Mammary epithelial cell (primary cell): ENCODE measurements at regions of chrX and their contacts with region 1.

Region 1: GRCh38 chrX:1657367-1658070 is 42.7 kb downstream of the ASMT start:
- DNase-seq: peak; percentile 82
- H3K4me3 ChIP-seq: peak overlapping the region; percentile 43 to 64 (median 59)
- H3K27ac ChIP-seq: peak overlapping the region; percentile 65
- H3K4me1 ChIP-seq: peaks cover 9% of the 10 kb centered on the region
- H3K27me3 ChIP-seq: no peaks in the 10 kb centered on the region
- CTCF ChIP-seq: peak in 1 of 2 donors; percentile 28

Region 2: DNA sequence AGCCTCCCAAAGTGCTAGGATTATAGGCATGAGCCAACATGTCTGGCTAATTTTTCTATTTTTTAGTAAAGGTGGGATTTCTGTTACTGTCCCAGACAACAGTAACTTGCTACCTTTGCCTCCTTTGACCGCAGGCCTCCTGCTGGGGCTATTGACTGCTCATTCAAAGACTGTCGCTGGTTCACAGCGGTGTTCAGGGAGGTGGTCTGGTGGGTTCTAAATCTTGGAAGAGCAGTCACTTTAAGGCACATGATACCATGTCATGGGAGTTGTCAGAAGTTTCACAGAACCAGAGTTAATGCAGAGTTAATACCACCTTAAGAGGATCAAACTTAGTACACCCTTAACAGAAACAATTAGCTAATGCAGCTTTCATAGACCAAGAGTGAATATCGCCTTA is 38.8 kb before region 1 on chrX:
- CTCF ChIA-PET with region 1: no interaction called
- dilution Hi-C with region 1: no loop called
- in situ Hi-C with region 1: no loop called
- intact Hi-C with region 1: no loop called
- DNase-seq: no peak
- H3K4me3 ChIP-seq: no peak overlapping the region
- H3K27ac ChIP-seq: no peak overlapping the region
- H3K4me1 ChIP-seq: no peaks in the 10 kb centered on the region
- H3K27me3 ChIP-seq: no peaks in the 10 kb centered on the region
- CTCF ChIP-seq: no peak

Region 3: DNA sequence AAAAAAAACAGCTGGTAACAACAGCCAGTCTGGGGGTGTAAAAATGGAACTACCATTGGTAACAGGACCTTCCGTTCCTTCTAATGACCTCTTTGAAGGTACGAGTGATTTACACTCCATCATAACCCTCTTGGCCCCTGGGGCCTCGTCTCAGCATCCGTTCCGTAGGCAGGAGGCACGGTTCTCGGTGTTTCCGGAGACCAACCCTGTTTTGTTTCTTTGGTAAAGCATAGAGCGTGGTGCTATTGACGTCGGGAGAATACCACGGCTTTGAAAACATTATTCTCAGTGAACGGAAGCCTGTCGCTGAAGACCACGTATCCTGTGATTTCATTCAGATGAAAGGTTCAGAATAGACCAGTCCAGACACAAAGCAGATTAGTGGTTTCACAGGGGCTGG is 156.3 kb after region 1 on chrX:
- CTCF ChIA-PET with region 1: no interaction called
- dilution Hi-C with region 1: no loop called
- in situ Hi-C with region 1: no loop called
- intact Hi-C with region 1: no loop called
- DNase-seq: no peak
- H3K4me3 ChIP-seq: no peak overlapping the region
- H3K27ac ChIP-seq: no peak overlapping the region
- H3K4me1 ChIP-seq: no peaks in the 10 kb centered on the region
- H3K27me3 ChIP-seq: no peaks in the 10 kb centered on the region
- CTCF ChIP-seq: no peak

Region 4: GRCh38 chrX:2595258-2595657 is 937.7 kb after region 1 on chrX:
- CTCF ChIA-PET with region 1: no interaction called
- dilution Hi-C with region 1: no loop called
- in situ Hi-C with region 1: loop called in 1 of 2 experiments (anchors 10 kb)
- intact Hi-C with region 1: loop called (anchors 1 kb)
- DNase-seq: peak; percentile 78
- H3K4me3 ChIP-seq: no peak overlapping the region
- H3K27ac ChIP-seq: no peak overlapping the region
- H3K4me1 ChIP-seq: no peaks in the 10 kb centered on the region
- H3K27me3 ChIP-seq: no peaks in the 10 kb centered on the region
- CTCF ChIP-seq: no peak

Region 5: GRCh38 chrX:2627272-2627867 is 969.9 kb after region 1 on chrX:
- CTCF ChIA-PET with region 1: no interaction called
- dilution Hi-C with region 1: no loop called
- in situ Hi-C with region 1: loop called in 1 of 2 experiments (anchors 10 kb)
- intact Hi-C with region 1: loop called (anchors 1 kb)
- DNase-seq: peak; percentile 16
- H3K4me3 ChIP-seq: no peak overlapping the region
- H3K27ac ChIP-seq: no peak overlapping the region
- H3K4me1 ChIP-seq: no peaks in the 10 kb centered on the region
- H3K27me3 ChIP-seq: no peaks in the 10 kb centered on the region
- CTCF ChIP-seq: peak; percentile 32 to 52

Region 6: DNA sequence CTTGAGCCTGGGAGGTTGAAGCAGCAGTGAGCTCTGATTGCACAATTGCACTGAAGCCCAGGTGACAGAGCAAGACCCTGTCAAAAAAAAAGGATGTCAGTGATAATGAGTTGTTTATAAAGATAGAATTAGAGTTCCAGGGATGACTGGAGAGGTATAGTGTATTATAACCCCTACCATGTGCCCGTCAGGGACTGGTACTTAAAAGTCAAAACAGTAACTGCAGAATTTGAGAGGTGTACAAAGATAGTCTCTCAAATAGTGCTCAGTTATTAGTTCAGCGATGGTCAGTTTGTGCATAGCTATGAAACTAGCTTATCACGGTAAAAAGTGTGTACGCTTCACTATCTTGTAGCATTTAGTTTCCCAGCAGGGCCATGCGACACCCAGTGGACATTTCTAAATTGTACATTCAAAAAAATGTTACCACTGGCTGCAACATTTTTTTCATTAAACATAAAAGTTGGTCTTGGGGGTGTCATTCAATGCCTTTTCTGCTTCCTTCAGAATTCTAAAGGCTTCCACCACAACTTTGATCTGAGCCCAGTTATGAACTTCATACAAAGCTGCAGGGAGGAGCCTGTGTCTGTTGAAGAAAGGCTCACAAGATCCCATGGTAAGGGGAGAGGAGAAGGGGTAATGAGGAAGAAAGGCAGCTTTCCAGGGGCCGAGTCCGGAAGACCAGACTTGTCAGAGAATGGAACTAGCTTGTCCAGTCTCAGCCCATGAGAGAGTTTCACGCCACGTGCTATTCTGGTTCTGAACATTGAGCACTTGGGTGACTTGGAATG is 1162.0 kb after region 1 on chrX:
- CTCF ChIA-PET with region 1: no interaction called
- dilution Hi-C with region 1: no loop called
- in situ Hi-C with region 1: loop called in 1 of 2 experiments (anchors 25 kb)
- intact Hi-C with region 1: no loop called
- DNase-seq: peak; percentile 12
- H3K4me3 ChIP-seq: no peak overlapping the region
- H3K27ac ChIP-seq: no peak overlapping the region
- H3K4me1 ChIP-seq: no peaks in the 10 kb centered on the region
- H3K27me3 ChIP-seq: no peaks in the 10 kb centered on the region
- CTCF ChIP-seq: peak in 1 of 2 donors; percentile 25